ENCODE measurements at regions of chr20 and their contacts with region 1.

Region 1: DNA sequence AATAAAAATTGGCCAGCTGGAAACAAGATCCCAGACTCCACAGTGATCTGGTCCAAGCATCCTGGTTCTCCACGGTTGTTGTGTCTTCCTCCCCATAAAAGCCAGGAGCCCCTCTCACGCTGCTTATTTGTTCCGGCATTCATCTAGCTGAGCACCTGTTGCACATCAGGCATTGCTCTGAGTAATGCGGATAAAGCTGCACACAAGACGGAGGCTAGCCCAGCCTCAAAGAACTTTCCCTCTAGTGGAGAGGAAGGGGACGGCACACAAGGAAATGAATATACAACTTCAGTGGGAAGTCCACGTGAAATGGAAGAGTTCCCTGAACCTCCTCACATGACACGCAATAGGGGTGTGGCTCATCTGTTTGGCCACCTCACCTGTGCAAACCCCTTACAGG is 30.3 kb upstream of the NXT1 start:
- DNase-seq: no peak
- ATAC-seq: no peak

Region 2: GRCh38 chr20:23048283-23049200 is 271.8 kb before region 1 on chr20:
- intact Hi-C with region 1: loop called (anchors 5 kb)
- DNase-seq: peak; percentile 74
- ATAC-seq: peak; percentile 33

Region 3: GRCh38 chr20:23200918-23201317 is 119.4 kb before region 1 on chr20:
- intact Hi-C with region 1: no loop called
- DNase-seq: no peak
- ATAC-seq: no peak

Measured in sciatic nerve (tissue), 2 donors.